Naive thymus-derived CD8-positive, alpha-beta T cell (primary cell): ENCODE measurements at regions of chr1 and their contacts with region 1.

Region 1: GRCh38 chr1:156510709-156511108 is 10.1 kb upstream of the MEF2D start:
- DNase-seq: peak in 1 of 10 donors; percentile 27
- ATAC-seq: no peak
- H3K4me3 Mint-ChIP-seq: no peak overlapping the region
- H3K27ac Mint-ChIP-seq: peak overlapping the region in 7 of 10 donors; percentile 19 to 84 (median 36)
- H3K4me1 Mint-ChIP-seq: peaks cover 15 to 49% (median 47%) of the 10 kb centered on the region in 4 donors
- H3K27me3 Mint-ChIP-seq: no peaks in the 10 kb centered on the region

Region 2: GRCh38 chr1:156524481-156524869 is 13.8 kb after region 1 on chr1:
- POLR2A ChIA-PET with region 1: interaction called, 13 read pairs
- DNase-seq: peak in 5 of 10 donors; percentile 13 to 62 (median 40)
- ATAC-seq: peak; percentile 69 to 77
- H3K4me3 Mint-ChIP-seq: peak overlapping the region; percentile 64 to 82 (median 72)
- H3K27ac Mint-ChIP-seq: peak overlapping the region; percentile 12 to 89 (median 77)
- H3K4me1 Mint-ChIP-seq: peaks cover 29 to 48% (median 46%) of the 10 kb centered on the region in 4 donors
- H3K27me3 Mint-ChIP-seq: no peaks in the 10 kb centered on the region

Region 3: DNA sequence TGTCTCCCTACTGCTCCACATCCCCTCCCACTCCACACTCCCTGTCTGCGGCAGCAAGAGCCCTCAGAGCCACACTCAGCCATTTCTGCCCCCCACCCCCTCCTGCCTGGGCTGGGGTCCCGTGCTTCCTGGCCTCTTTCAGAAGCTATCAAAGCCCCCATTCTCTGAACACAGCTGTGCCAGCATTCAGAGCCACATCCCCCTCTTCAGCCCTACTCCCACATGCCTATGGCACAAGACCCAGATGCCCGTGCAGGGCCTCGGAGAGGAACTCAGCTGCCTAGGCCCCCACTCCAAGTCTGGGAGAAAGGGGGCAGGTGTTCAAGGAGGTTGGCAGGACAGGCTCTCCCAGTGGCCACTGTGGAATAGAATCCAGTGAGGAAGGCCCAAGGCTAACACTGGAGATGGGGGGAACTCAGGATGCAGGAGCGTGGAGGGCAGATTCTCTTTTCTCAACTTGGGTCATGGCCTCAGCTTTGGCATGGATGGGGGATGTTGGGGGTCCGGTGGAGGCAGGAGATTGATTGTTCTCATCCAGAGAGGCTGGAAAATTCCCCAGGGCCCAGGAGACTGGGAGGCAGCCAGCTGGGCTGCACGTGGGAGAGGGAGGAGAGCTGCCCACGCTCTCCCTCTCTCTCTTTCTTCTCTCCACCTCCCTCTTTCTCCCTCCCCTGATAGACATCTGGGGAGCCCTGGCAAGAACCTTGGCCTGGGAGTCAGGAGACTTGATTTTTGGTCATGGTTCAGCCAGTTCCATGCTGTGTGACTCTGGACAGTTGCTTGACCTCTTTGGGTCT is 127.7 kb after region 1 on chr1:
- POLR2A ChIA-PET with region 1: no interaction called
- DNase-seq: no peak
- ATAC-seq: no peak
- H3K4me3 Mint-ChIP-seq: no peak overlapping the region
- H3K27ac Mint-ChIP-seq: no peak overlapping the region
- H3K4me1 Mint-ChIP-seq: peaks cover 14 to 24% (median 23%) of the 10 kb centered on the region in 4 donors
- H3K27me3 Mint-ChIP-seq: peaks cover 54 to 91% (median 70%) of the 10 kb centered on the region in 5 donors